ENCODE measurements at regions of chr5 and their contacts with region 1.

Region 1: GRCh38 chr5:56900858-56901578 is 8.4 kb upstream of the SETD9 start:
- DNase-seq: no peak
- H3K4me3 ChIP-seq: no peak overlapping the region
- H3K27ac ChIP-seq: no peak overlapping the region
- H3K27me3 ChIP-seq: no peaks in the 10 kb centered on the region
- CTCF ChIP-seq: peak; percentile 55 to 93 (median 78)

Region 2: GRCh38 chr5:57137401-57137800 is 236.4 kb after region 1 on chr5:
- intact Hi-C with region 1: loop called in 1 of 2 experiments (anchors 2 kb)
- DNase-seq: no peak
- H3K4me3 ChIP-seq: no peak overlapping the region
- H3K27ac ChIP-seq: no peak overlapping the region
- H3K27me3 ChIP-seq: no peaks in the 10 kb centered on the region
- CTCF ChIP-seq: no peak

Region 3: GRCh38 chr5:57221049-57221568 is 320.1 kb after region 1 on chr5:
- intact Hi-C with region 1: loop called (anchors 1 to 2 kb)
- DNase-seq: no peak
- H3K4me3 ChIP-seq: no peak overlapping the region
- H3K27ac ChIP-seq: peak overlapping the region in 2 of 59 donors; percentile 5 to 11
- H3K27me3 ChIP-seq: no peaks in the 10 kb centered on the region
- CTCF ChIP-seq: peak; percentile 71 to 99 (median 90)